Dendritic cell treated with granulocyte-macrophage colony-stimulating factor and Interleukin-4, amounts not matched to agents 40 ng/mL and 50 ng/mL, for 4 days (primary cell): ENCODE measurements at regions of chr5 and their contacts with region 1.

Region 1: GRCh38 chr5:159156426-159157238 is 52.7 kb downstream of the RNF145 start:
- H3K4me3 Mint-ChIP-seq: no peak overlapping the region
- H3K27ac Mint-ChIP-seq: no peak overlapping the region
- H3K4me1 Mint-ChIP-seq: no peaks in the 10 kb centered on the region
- H3K27me3 Mint-ChIP-seq: no peaks in the 10 kb centered on the region

Region 2: GRCh38 chr5:159184858-159185381 is 28.3 kb after region 1 on chr5:
- intact Hi-C with region 1: no loop called
- H3K4me3 Mint-ChIP-seq: no peak overlapping the region
- H3K27ac Mint-ChIP-seq: peak overlapping the region; percentile 77
- H3K4me1 Mint-ChIP-seq: peaks cover 52% of the 10 kb centered on the region
- H3K27me3 Mint-ChIP-seq: no peaks in the 10 kb centered on the region

Region 3: DNA sequence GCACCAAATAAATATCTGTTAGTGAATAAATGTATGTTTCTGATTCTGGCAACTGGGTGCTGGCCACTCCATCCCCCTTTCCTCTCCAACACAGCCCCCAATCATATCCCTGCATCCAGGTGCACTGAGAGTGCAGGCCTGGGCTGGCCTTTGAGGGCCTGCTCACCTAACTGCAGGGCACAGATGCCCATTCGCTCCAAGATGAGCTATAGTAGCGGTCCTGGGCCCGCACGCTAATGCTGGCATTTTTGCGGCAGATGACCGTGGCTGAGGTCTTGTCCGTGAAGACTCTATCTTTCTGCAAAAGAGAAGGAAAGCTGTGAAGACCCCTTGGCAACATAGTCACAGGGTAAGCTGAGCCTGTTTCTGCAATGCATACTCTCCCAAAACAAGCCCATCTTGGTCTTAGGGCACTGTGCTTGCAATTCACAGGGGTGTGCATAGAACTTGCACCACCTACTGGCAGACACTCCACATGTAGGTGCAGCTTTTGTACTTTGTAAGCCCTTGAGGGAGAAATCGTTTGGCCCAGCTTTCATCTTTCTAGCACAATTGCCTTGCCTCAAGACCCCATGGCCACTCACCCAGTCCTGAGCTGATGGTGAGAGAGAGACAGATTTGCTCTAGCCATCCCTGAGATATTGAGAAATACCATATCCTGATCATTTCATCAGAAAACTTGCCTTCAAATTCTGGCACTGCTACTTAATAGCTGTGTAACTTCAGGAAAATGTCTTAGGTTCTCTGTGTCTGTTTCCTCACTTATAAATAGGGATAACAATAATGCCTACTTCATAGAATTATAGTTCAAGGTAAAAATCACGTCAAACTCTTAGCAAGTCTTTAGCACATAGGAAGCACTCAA is 160.1 kb after region 1 on chr5:
- intact Hi-C with region 1: loop called (anchors 2 kb)
- H3K4me3 Mint-ChIP-seq: no peak overlapping the region
- H3K27ac Mint-ChIP-seq: no peak overlapping the region
- H3K4me1 Mint-ChIP-seq: no peaks in the 10 kb centered on the region
- H3K27me3 Mint-ChIP-seq: peaks cover 8% of the 10 kb centered on the region

Region 4: DNA sequence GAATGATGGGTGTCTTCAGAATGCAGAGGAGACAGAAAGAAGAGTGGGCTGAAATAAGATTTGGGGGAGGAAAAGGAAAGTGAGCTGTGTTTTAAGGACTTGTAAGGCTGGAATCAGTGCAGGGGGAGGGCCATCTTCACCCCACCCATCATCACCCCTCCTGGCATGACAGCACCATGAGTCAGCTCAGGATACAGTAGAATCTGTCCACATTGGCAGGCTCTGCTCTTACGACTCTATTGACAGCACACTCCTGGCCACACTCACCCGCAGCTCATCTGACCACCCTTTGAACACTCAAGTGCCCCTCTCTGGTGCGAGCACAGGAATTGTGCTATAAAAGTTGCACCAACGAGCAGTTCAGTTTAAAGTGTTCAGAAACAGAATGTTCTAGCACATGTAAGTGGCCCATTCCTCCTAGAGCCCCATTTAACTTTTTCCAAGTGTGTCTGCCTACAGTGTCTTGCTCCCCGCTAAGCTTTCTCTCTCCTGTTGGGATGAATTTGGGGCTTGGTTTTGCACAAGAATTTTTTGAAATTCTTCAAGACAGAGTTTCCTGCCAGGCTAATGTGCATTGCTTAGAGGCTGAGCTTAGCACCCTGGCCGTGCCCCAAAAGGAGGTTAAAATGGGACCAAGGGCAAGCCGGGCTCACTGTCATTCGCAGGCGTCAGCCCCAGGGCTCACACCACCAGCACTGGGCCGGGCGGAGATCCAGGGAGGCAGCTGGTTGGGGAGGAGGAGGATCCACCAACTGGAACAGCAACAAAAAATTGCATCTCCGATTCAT is 771.7 kb after region 1 on chr5:
- intact Hi-C with region 1: loop called (anchors 10 kb)
- H3K4me3 Mint-ChIP-seq: no peak overlapping the region
- H3K27ac Mint-ChIP-seq: no peak overlapping the region
- H3K4me1 Mint-ChIP-seq: no peaks in the 10 kb centered on the region
- H3K27me3 Mint-ChIP-seq: peaks cover 37% of the 10 kb centered on the region